ENCODE measurements at regions of chr5 and their contacts with region 1.

Region 1: GRCh38 chr5:38666668-38667498 is 110.4 kb upstream of the LIFR start:
- H3K4me3 ChIP-seq: no peak overlapping the region
- H3K27ac ChIP-seq: no peak overlapping the region
- H3K4me1 ChIP-seq: peaks cover 5% of the 10 kb centered on the region
- CTCF ChIP-seq: peak; percentile 77

Region 2: GRCh38 chr5:38780950-38781349 is 114.1 kb after region 1 on chr5:
- CTCF ChIA-PET with region 1: interaction called, 11 read pairs
- POLR2A ChIA-PET with region 1: interaction called, 5 read pairs
- H3K4me3 ChIP-seq: no peak overlapping the region
- H3K27ac ChIP-seq: no peak overlapping the region
- H3K4me1 ChIP-seq: peaks cover 19% of the 10 kb centered on the region
- CTCF ChIP-seq: no peak

Measured in HEK293 (cell line).